ENCODE measurements at regions of chr14 and their contacts with region 1.

Region 1: DNA sequence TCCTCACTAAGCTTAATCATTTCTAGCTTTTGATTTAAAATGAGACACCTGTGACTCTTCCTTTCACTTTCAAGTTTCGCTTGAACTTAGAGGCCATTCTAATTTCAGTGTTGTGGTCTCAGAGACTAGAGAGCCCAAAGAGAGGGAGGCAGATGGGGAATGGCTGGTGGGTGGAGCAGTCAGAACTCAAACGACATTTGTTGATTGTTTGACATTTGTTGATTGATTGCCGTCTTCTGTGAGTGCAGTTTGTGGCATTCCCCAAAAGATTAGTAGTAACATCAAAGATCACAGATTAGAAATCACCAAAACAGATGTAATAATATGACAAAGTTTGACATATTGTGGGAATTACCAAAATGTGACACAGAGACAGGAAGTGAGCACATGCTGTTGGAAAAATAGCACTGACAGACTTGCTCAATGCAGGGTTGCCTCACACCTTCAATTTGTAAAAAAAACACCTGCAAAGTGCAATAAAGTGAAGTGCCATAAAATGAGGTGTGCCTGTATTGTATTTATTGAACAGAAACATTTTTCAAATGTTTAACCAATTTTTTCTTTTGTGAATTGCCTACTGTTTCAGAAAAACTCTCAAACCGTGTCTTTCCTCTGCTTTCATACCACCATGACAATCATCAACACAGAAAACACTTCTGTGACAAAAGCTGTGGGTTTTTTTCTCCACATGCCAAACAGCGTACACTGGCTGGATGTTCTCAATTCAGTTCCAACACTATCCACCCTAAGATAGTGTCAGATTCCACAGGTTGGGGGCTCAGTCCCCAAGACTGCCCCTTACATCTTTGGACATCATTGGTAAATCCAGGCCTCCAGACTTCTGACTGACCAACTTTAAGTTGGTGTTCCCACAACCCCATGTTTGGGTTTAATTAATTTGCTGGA is 376.3 kb upstream of the RGS6 start:
- DNase-seq: peak; percentile 98
- ATAC-seq: peak; percentile 87
- H3K4me3 ChIP-seq: no peak overlapping the region
- H3K27ac ChIP-seq: peak overlapping the region; percentile 98
- H3K4me1 ChIP-seq: peaks cover 49% of the 10 kb centered on the region
- H3K27me3 ChIP-seq: no peaks in the 10 kb centered on the region
- CTCF ChIP-seq: no peak
- EP300 ChIP-seq: peak; percentile 60 to 87; a peak in 3 of 4 replicates
- POLR2A ChIP-seq: no peak
- RAD21 ChIP-seq: peak; percentile 24; the same call in 1 of the 2 replicates

Region 2: DNA sequence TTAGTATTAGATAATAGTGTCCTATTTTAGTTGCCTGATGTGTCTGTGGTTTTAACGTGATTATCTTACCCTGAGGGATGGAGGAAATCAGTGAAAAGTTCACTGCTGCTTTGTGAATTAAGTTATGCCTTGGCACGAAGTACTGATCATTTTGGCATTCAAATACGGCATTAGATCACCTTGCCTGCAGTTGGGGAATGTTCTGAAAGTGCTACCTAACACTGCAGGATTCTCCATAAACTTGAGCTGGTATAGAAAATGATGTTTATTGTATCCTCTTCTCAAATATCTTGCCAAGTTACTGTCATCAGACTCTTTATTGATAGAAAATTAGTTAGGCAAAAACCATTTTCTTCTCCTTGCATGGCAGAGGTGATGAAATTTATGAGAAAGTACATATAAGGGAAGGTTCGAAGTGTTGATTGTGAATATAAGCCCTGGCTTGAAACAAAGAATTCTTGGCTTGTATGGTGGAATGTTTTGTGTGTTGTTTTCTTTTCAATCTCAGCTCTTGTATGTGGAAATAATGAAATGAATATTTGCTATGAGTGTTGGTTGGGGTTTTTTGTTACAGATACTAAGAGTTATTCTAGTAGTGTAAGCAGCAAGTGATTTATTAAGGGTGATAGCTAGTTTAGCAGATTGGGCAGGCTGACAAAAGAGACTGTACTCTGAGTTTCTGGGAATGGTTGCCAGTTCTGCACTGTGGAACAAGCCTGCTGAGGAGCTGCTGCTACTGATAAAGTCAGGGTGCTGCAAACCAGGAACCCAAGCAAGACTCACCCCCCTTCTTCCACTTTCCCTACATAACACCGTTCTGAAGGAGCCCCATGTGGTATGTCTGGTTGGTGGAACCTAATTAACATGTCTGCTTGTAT is 200.3 kb before region 1 on chr14:
- CTCF ChIA-PET with region 1: no interaction called
- POLR2A ChIA-PET with region 1: no interaction called
- RAD21 ChIA-PET with region 1: interaction called, 18 read pairs
- SMC1A ChIA-PET with region 1: interaction called, 13 read pairs
- in situ Hi-C with region 1: no loop called
- intact Hi-C with region 1: no loop called
- DNase-seq: no peak
- ATAC-seq: peak; percentile 45
- H3K4me3 ChIP-seq: peak overlapping the region; percentile 20; the same call in 1 of the 2 replicates
- H3K27ac ChIP-seq: peak overlapping the region; percentile 52
- H3K4me1 ChIP-seq: peaks cover 38% of the 10 kb centered on the region
- H3K27me3 ChIP-seq: no peaks in the 10 kb centered on the region
- CTCF ChIP-seq: no peak
- EP300 ChIP-seq: no peak
- POLR2A ChIP-seq: no peak
- RAD21 ChIP-seq: no peak

Region 3: GRCh38 chr14:71472043-71472960 is 83.6 kb before region 1 on chr14:
- CTCF ChIA-PET with region 1: interaction called, 4 read pairs
- POLR2A ChIA-PET with region 1: interaction called, 5 read pairs
- RAD21 ChIA-PET with region 1: interaction called, 9 read pairs
- SMC1A ChIA-PET with region 1: interaction called, 13 read pairs
- in situ Hi-C with region 1: no loop called
- intact Hi-C with region 1: no loop called
- DNase-seq: no peak
- ATAC-seq: peak; percentile 84
- H3K4me3 ChIP-seq: no peak overlapping the region
- H3K27ac ChIP-seq: peak overlapping the region; percentile 69
- H3K4me1 ChIP-seq: peaks cover 35% of the 10 kb centered on the region
- H3K27me3 ChIP-seq: no peaks in the 10 kb centered on the region
- CTCF ChIP-seq: no peak
- EP300 ChIP-seq: 0 out of 4 replicates have a peak, but pooled peaks of 1 of the 2 experiments have one; percentile 1
- POLR2A ChIP-seq: no peak
- RAD21 ChIP-seq: no peak

Region 4: DNA sequence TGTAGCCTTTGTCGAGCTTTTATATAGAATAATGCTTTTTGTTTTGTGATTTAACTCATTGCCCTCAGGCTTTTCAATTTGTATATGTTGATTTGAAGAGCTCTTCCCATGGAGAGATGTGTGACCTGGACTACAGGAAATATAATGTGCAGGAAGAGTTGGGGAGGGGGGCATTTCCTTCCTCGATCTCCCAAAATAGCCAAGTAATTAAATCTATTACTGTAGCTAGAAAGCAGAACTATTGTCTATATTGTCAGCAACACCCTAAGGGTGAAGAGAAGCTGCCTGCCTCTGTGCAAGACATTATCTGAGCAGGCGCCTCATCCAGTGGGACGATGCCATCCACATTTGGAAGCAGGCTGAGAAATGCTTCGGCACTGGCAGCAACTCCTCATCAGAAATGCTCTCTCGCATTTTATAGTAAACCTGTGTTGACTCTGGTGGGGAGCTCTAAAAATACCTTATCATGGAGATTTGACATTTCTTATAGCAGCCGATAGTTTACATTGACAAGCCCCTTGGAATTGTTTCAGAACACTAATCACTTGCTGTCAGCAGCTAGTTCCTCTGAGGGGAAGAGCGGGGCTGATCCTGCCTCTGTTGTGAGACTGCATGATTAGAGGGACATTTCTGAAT is 16.1 kb before region 1 on chr14:
- CTCF ChIA-PET with region 1: interaction called, 8 read pairs
- POLR2A ChIA-PET with region 1: interaction called, 7 read pairs
- RAD21 ChIA-PET with region 1: interaction called, 7 read pairs
- SMC1A ChIA-PET with region 1: interaction called, 79 read pairs
- in situ Hi-C with region 1: no loop called
- intact Hi-C with region 1: no loop called
- DNase-seq: no peak
- ATAC-seq: no peak
- H3K4me3 ChIP-seq: no peak overlapping the region
- H3K27ac ChIP-seq: no peak overlapping the region
- H3K4me1 ChIP-seq: 0 out of 2 replicates have a peak, but pooled peaks cover 5% of the 10 kb centered on the region
- H3K27me3 ChIP-seq: no peaks in the 10 kb centered on the region
- CTCF ChIP-seq: no peak
- EP300 ChIP-seq: no peak
- POLR2A ChIP-seq: no peak
- RAD21 ChIP-seq: no peak

Region 5: DNA sequence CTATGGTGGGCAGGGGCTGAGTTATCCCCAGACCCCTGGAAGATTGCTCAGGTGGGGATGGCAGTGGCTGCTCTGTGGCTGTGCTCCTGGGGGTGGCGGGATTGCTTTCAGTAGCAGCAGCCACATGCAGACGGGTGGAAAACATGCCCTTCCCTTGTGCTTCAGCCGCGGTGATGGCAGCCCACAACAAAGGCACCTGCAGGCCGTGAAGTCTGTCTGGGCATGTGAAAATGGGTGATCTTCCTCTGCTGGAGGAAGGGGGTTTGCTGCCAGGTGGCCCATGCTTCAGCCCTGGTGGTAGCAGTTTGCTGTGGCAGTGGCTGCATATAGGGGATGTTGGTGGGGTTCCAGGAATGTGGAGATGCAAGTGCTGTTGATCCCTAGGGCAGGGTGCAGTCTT is 50.2 kb after region 1 on chr14:
- CTCF ChIA-PET with region 1: interaction called, 3 read pairs
- POLR2A ChIA-PET with region 1: interaction called, 3 read pairs
- RAD21 ChIA-PET with region 1: interaction called, 10 read pairs
- SMC1A ChIA-PET with region 1: interaction called, 5 read pairs
- in situ Hi-C with region 1: no loop called
- intact Hi-C with region 1: no loop called
- DNase-seq: no peak
- ATAC-seq: peak; percentile 14
- H3K4me3 ChIP-seq: no peak overlapping the region
- H3K27ac ChIP-seq: peak overlapping the region; percentile 77
- H3K4me1 ChIP-seq: peaks cover 23% of the 10 kb centered on the region
- H3K27me3 ChIP-seq: no peaks in the 10 kb centered on the region
- CTCF ChIP-seq: no peak
- EP300 ChIP-seq: no peak
- POLR2A ChIP-seq: no peak
- RAD21 ChIP-seq: no peak

Region 6: GRCh38 chr14:71780075-71780474 is 224.2 kb after region 1 on chr14:
- CTCF ChIA-PET with region 1: no interaction called
- POLR2A ChIA-PET with region 1: no interaction called
- RAD21 ChIA-PET with region 1: no interaction called
- SMC1A ChIA-PET with region 1: no interaction called
- in situ Hi-C with region 1: no loop called
- intact Hi-C with region 1: no loop called
- DNase-seq: no peak
- ATAC-seq: no peak
- H3K4me3 ChIP-seq: no peak overlapping the region
- H3K27ac ChIP-seq: no peak overlapping the region
- H3K4me1 ChIP-seq: no peaks in the 10 kb centered on the region
- H3K27me3 ChIP-seq: no peaks in the 10 kb centered on the region
- CTCF ChIP-seq: no peak
- EP300 ChIP-seq: no peak
- POLR2A ChIP-seq: no peak
- RAD21 ChIP-seq: no peak